ENCODE measurements at regions of chr2 and their contacts with region 1.

Region 1: GRCh38 chr2:10832203-10832936 is 19.8 kb upstream of the PDIA6 start:
- H3K4me3 Mint-ChIP-seq: no peak overlapping the region
- H3K27ac Mint-ChIP-seq: no peak overlapping the region
- H3K4me1 Mint-ChIP-seq: peaks cover 8% of the 10 kb centered on the region
- H3K27me3 Mint-ChIP-seq: peaks cover 74% of the 10 kb centered on the region

Region 2: GRCh38 chr2:10787176-10787968 is 45.0 kb before region 1 on chr2:
- intact Hi-C with region 1: no loop called
- H3K4me3 Mint-ChIP-seq: no peak overlapping the region
- H3K27ac Mint-ChIP-seq: no peak overlapping the region
- H3K4me1 Mint-ChIP-seq: no peaks in the 10 kb centered on the region
- H3K27me3 Mint-ChIP-seq: no peaks in the 10 kb centered on the region

Region 3: GRCh38 chr2:10900216-10901109 is 68.1 kb after region 1 on chr2:
- intact Hi-C with region 1: loop called (anchors 1 kb)
- H3K4me3 Mint-ChIP-seq: no peak overlapping the region
- H3K27ac Mint-ChIP-seq: no peak overlapping the region
- H3K4me1 Mint-ChIP-seq: peaks cover 10% of the 10 kb centered on the region
- H3K27me3 Mint-ChIP-seq: peaks cover 17% of the 10 kb centered on the region

Region 4: GRCh38 chr2:11124503-11125068 is 292.2 kb after region 1 on chr2:
- intact Hi-C with region 1: loop called (anchors 2 kb)
- H3K4me3 Mint-ChIP-seq: no peak overlapping the region
- H3K27ac Mint-ChIP-seq: no peak overlapping the region
- H3K4me1 Mint-ChIP-seq: no peaks in the 10 kb centered on the region
- H3K27me3 Mint-ChIP-seq: peaks cover 50% of the 10 kb centered on the region

Region 5: DNA sequence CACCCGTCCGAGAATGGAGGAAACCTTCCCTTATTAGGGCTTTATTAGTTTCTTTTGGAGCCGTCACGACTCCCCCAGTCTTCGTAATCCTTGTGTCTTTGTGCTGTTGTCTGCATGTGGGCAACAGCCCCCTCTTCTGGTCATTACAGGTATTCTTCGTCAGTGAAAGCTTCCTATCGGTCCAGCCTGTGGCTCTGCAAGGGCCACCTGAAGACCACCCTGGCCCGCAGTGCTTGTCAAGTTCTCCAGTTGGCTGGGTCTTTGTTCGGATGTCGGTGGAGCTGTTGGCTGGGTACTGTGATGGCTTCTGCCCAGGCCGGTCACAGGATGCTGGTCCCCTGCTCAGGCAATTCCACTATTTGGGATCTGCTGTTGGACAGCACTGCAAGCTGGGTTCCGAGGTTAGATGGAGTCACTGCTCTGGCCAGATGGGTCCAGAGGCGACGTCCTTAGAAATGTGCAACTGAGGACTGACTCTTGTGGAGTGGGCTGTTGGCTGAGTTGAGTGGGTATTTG is 614.4 kb after region 1 on chr2:
- intact Hi-C with region 1: loop called (anchors 10 kb)
- H3K4me3 Mint-ChIP-seq: no peak overlapping the region
- H3K27ac Mint-ChIP-seq: no peak overlapping the region
- H3K4me1 Mint-ChIP-seq: no peaks in the 10 kb centered on the region
- H3K27me3 Mint-ChIP-seq: no peaks in the 10 kb centered on the region